HEK293 (cell line): ENCODE measurements at regions of chr14 and their contacts with region 1.

Region 1: DNA sequence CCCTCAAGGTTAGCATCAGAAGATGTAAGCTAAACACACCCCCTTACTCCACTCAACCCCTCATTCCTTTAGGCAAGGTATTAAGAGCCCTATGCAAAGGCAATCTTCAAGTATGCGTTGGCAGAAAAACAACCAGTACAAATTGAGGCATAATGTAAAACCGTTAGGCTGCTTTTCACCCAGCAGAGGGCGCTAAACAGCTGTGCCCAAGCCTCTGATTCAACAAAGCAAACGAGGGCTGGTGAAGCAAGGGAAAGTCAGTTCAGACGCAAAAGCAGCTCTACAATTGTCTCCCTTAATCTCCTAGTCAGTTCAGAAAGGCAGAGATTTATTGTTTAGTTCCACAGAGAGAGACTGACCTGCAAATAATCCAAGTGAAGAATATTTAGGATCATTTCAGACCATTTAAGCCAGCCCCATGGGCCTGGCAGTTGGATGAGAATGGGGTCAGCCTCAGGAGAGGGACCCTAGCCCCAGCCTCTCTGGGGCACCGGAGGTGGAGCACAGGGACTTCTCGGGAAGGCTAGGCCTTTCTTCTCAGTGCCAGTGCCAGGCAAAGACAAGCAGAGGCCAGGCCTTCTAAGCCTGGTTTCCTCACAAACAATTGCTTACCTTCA is 23.5 kb downstream of the DCAF5 start:
- H3K4me3 ChIP-seq: no peak overlapping the region
- H3K27ac ChIP-seq: no peak overlapping the region
- H3K4me1 ChIP-seq: peaks cover 49% of the 10 kb centered on the region
- CTCF ChIP-seq: peak; percentile 69; the same call in 1 of the 2 replicates

Region 2: GRCh38 chr14:69117020-69117767 is 12.2 kb before region 1 on chr14:
- CTCF ChIA-PET with region 1: interaction called, 12 read pairs
- POLR2A ChIA-PET with region 1: no interaction called
- H3K4me3 ChIP-seq: no peak overlapping the region
- H3K27ac ChIP-seq: no peak overlapping the region
- H3K4me1 ChIP-seq: no peaks in the 10 kb centered on the region
- CTCF ChIP-seq: no peak

Region 3: DNA sequence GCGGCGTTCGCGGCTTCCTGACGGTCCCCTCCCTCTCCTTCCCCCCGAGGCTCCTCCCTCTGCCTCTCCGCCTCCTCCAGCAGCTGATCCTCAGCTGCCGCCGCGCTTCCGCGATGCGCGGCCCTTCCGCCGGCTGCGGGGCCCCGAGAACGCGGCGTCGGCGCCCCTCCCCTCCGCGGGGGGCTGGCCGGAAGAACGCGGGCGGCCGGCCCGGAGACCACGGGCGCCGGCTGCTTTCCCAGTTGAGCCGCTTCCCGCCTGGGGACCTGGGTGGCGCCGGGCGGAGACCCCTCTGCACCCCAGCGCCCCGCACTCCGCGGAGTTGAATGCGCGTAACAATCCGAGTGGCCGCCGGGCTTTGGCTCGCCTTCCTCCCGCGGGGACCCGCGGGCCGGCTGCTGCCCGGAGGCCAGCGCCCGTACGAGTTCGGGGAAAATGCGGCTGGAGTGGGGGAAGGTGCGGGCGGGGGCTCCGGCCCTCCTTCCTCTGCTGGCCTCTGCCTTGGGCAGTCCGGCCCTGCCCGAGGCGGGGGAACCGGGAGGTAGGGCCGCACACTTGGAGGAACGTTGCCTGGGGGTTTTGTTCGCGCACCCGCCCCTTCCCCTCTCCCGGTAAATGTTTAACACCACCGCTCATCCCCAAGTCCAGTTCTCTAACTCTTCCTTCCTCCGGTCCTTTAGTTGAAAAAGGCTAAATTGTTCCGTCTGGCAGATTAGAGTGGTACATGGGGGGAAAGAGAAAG is 23.9 kb after region 1 on chr14:
- CTCF ChIA-PET with region 1: interaction called, 24 read pairs
- POLR2A ChIA-PET with region 1: interaction called, 3 read pairs
- H3K4me3 ChIP-seq: peak overlapping the region; percentile 92
- H3K27ac ChIP-seq: peak overlapping the region; percentile 96
- H3K4me1 ChIP-seq: peaks cover 19% of the 10 kb centered on the region
- CTCF ChIP-seq: no peak